MCF 10A (cell line): ENCODE measurements at regions of chr1 and their contacts with region 1.

Region 1: DNA sequence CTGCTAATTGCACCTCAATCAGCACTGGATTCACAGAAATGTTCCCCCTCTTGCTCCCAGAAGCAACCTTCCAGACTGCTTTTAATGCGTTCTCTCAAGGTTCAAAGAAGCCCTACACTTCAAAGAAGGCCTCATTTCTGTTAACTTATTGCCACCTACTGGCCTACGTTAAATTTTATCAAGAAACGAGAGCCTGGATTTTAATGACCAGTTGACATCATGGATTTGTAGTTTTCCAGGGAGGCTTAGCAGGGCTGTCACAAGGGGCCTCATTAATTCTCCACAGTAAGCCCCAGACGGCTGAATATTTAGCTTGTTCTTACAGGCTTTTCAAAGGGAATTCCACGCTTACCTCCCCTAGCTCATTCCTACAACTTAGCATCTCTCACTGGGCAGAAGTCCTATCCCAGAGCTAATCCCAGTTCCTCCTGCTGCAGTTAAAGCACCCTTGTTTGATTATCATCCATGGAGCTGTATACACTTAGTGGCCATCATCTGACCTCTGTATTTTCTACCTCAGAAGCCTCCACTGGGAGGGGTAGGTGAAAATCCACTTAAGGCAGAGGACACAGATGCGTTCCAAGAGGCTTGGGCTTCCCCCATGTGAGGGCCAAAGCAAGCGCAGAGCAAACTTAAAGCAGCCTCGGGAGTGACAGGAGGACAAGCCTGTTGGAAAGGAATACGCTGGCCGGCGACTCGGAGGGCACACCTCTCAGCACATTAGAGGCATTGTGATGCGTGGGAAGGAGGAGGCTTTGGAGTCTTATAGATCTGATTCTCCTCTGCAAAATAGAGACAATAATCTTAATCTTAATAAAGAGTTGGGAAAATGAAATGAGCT is 32.2 kb upstream of the CYP4X1 start:
- DNase-seq: peak; percentile 52
- H3K4me3 Mint-ChIP-seq: no peak overlapping the region
- H3K27ac Mint-ChIP-seq: no peak overlapping the region
- H3K4me1 Mint-ChIP-seq: peaks cover under 1% of the 10 kb centered on the region
- H3K27me3 Mint-ChIP-seq: peaks cover 3% of the 10 kb centered on the region
- CTCF ChIP-seq: peak; percentile 38

Region 2: DNA sequence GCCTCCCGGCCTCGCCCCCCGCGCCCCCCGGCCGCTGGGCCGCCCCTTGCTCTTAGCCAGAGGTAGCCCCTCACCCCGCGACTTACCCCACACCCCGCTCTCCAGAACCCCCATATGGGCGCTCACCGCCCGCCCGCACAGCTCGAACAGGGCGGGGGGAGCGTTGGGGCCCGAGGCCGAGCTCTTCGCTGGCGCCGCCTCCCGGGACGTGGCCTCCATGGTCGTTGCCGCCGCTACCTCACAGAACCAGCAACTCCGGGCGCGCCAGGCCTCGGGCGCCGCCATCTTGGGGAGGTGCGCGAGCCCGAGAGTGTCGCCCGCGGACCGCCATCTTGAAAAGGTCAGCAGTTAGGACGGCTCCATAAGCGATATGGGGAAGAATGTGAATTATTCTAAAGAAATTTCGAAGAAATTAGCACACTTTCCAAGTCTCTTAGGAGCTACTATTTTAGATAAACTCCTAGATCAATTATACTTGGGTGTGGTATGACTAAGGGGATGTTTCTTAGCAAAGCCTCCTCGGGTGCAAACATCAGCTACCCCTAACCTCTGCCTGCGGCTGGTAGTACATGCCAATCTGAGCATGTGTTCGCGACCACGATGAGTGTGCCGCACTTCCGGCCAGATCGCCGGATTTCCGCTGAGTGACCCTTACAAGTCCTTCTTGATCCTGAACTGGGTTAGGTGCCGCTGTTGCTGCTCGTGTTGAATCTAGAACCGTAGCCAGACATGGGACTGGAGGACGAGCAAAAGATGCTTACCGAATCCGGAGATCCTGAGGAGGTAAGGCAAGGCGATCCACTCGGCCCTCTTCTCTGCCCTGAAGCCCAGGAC is 688.0 kb before region 1 on chr1 and contains the starts of genes LRRC41 and UQCRH:
- CTCF ChIA-PET with region 1: no interaction called
- POLR2A ChIA-PET with region 1: no interaction called
- intact Hi-C with region 1: no loop called
- DNase-seq: peak; percentile 96
- H3K4me3 Mint-ChIP-seq: peak within 1 kb of the TSS; percentile 99
- H3K27ac Mint-ChIP-seq: peak within 1 kb of the TSS; percentile 100
- H3K4me1 Mint-ChIP-seq: peaks cover 39% of the 10 kb centered on the region
- H3K27me3 Mint-ChIP-seq: no peaks in the 10 kb centered on the region
- CTCF ChIP-seq: no peak
- total RNA-seq, gene LRRC41: 92.6 and 105 TPM in 2 replicates
- total RNA-seq, gene UQCRH: 299 and 318 TPM in 2 replicates

Region 3: DNA sequence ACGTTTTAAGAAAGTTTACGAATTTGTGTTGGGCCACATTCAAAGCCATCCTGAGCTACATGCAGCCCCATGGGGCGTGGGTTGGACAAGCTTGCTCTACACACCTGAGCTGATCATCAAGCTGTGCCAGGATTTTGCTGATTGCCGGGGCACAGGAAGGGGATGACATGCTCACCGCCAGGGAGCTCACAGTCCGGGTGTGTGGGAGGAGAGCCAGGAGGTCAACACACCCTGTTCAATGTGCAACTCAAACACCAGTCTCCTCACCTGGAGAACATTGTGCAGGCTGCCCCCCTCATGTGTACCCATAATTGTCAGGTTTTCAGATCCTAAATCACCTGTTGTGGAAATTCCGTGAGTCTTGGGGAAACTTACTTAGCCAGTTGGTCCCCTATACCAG is 51.0 kb before region 1 on chr1:
- CTCF ChIA-PET with region 1: interaction called, 3 read pairs
- POLR2A ChIA-PET with region 1: interaction called, 4 read pairs
- intact Hi-C with region 1: loop called (anchors 1 kb)
- DNase-seq: no peak
- H3K4me3 Mint-ChIP-seq: no peak overlapping the region
- H3K27ac Mint-ChIP-seq: no peak overlapping the region
- H3K4me1 Mint-ChIP-seq: peaks cover 9% of the 10 kb centered on the region
- H3K27me3 Mint-ChIP-seq: peaks cover 11% of the 10 kb centered on the region
- CTCF ChIP-seq: no peak

Region 4: GRCh38 chr1:47002211-47002610 is 10.9 kb after region 1 on chr1:
- CTCF ChIA-PET with region 1: interaction called, 11 read pairs
- POLR2A ChIA-PET with region 1: no interaction called
- intact Hi-C with region 1: no loop called
- DNase-seq: peak; percentile 25
- H3K4me3 Mint-ChIP-seq: no peak overlapping the region
- H3K27ac Mint-ChIP-seq: no peak overlapping the region
- H3K4me1 Mint-ChIP-seq: peaks cover 4% of the 10 kb centered on the region
- H3K27me3 Mint-ChIP-seq: no peaks in the 10 kb centered on the region
- CTCF ChIP-seq: peak; percentile 26